Ovary (tissue), 10 donors: ENCODE measurements at regions of chr13 and their contacts with region 1.

Region 1: GRCh38 chr13:84542348-84542747 is 660.1 kb upstream of the SLITRK1 start:
- DNase-seq: no peak
- H3K4me3 ChIP-seq: no peak overlapping the region
- H3K27ac ChIP-seq: no peak overlapping the region
- H3K4me1 ChIP-seq: no peaks in the 10 kb centered on the region
- H3K27me3 ChIP-seq: no peaks in the 10 kb centered on the region
- CTCF ChIP-seq: no peak
- EP300 ChIP-seq: no peak
- POLR2A ChIP-seq: no peak

Region 2: DNA sequence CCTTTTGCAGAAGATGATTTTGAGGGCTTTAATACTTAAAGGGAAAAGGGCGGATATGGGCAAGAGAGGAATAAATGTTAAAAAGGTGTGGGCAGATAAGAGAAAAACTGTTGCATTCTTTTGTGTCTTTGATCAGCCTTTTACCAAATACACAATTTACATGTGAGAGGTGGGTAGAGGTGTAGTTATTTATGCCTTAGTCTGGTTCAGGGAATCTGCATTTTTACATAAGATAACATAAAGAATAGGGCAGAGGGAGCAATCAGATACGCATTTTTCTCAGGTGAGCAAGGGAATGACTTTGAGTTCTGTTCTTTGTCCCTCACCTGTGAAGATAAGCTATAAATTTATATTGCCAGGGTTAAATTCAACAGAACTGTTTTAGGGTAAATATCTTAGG is 48.3 kb after region 1 on chr13:
- intact Hi-C with region 1: loop called in 1 of 4 experiments (anchors 1 kb)
- DNase-seq: no peak
- H3K4me3 ChIP-seq: no peak overlapping the region
- H3K27ac ChIP-seq: no peak overlapping the region
- H3K4me1 ChIP-seq: no peaks in the 10 kb centered on the region
- H3K27me3 ChIP-seq: no peaks in the 10 kb centered on the region
- CTCF ChIP-seq: no peak
- EP300 ChIP-seq: no peak
- POLR2A ChIP-seq: no peak